HCT116 (cell line): ENCODE measurements at regions of chr13 and their contacts with region 1.

Region 1: DNA sequence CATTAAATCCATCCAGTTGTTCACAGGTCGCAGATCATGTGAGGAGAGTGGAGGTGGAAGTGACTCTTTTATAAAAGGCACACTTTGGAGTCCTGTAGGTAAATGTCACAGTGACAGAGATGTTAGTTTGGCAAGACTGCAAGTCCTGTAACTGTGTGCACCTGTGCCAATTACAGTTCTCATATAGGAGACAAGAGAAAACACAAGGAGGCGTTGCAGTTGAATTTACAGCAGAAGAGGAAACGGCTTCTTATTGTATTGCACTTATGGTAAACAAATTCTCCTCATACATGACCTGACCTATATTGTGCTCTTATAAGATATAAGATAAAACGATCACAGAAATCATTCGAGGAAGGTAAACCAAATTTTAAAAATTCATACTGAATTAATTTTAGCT is 732.8 kb upstream of the SLC10A2 start:
- DNase-seq: no peak
- ATAC-seq: no peak
- H3K4me3 ChIP-seq: no peak overlapping the region
- H3K27ac ChIP-seq: no peak overlapping the region
- H3K4me1 ChIP-seq: no peaks in the 10 kb centered on the region
- H3K27me3 ChIP-seq: no peaks in the 10 kb centered on the region
- CTCF ChIP-seq: no peak
- POLR2A ChIP-seq: no peak
- RAD21 ChIP-seq: no peak

Region 2: GRCh38 chr13:104372095-104372655 is 573.1 kb after region 1 on chr13:
- CTCF ChIA-PET with region 1: no interaction called
- POLR2A ChIA-PET with region 1: no interaction called
- RAD21 ChIA-PET with region 1: no interaction called
- intact Hi-C with region 1: loop called (anchors 5 kb)
- DNase-seq: no peak
- ATAC-seq: no peak
- H3K4me3 ChIP-seq: no peak overlapping the region
- H3K27ac ChIP-seq: no peak overlapping the region
- H3K4me1 ChIP-seq: no peaks in the 10 kb centered on the region
- H3K27me3 ChIP-seq: no peaks in the 10 kb centered on the region
- CTCF ChIP-seq: no peak
- POLR2A ChIP-seq: no peak
- RAD21 ChIP-seq: no peak